Psoas muscle (tissue), 8 donors: ENCODE measurements at regions of chr2 and their contacts with region 1.

Region 1: DNA sequence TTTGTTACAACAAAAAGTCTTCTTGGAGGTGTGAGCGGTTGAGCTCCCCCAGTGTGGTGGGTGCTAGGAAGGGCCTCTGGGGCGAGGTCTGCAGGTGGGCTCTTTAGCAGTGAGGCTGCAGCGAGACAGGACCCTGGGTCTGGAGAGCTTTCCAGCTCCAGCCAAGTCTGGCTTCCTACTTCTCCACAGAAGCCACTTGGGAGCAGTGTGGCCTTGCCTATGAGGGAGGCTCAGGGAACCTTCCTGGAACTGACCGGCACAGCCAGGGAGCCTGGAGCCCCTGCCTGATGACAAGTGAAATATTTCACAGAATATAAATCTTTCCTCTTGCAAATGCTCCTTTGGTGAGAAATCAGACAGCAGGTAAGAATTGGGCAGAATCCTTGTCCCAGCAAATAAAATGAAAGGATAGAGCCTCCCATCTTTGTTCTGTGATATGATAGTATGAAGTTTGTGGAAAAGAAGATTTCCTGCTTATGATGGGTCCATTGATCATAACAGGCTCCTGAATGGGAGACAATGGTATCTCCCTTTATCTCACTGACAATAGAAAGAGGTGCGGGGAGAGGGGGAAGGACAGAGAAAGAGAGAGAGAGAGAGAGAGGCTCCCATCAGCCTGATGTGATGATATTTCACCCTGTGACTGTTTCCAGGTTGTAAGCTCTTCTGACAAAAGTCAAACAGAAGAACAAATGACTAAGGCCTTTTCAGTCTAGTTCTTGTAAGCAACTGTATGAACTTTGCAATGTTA is 289.8 kb upstream of the SPRED2 start:
- DNase-seq: peak; percentile 28 to 67
- ATAC-seq: peak; percentile 68 to 87 (median 78)
- H3K4me3 ChIP-seq: no peak overlapping the region
- H3K27ac ChIP-seq: no peak overlapping the region
- H3K4me1 ChIP-seq: no peaks in the 10 kb centered on the region
- H3K27me3 ChIP-seq: no peaks in the 10 kb centered on the region
- CTCF ChIP-seq: peak; percentile 45

Region 2: GRCh38 chr2:65350684-65351083 is 371.5 kb before region 1 on chr2:
- intact Hi-C with region 1: no loop called
- DNase-seq: no peak
- ATAC-seq: no peak
- H3K4me3 ChIP-seq: no peak overlapping the region
- H3K27ac ChIP-seq: peak overlapping the region; percentile 23
- H3K4me1 ChIP-seq: peaks cover 19% of the 10 kb centered on the region
- H3K27me3 ChIP-seq: no peaks in the 10 kb centered on the region
- CTCF ChIP-seq: no peak

Region 3: GRCh38 chr2:65800998-65801397 is 78.8 kb after region 1 on chr2:
- intact Hi-C with region 1: loop called in 1 of 2 experiments (anchors 2 kb)
- DNase-seq: no peak
- ATAC-seq: peak in 3 of 4 donors; percentile 56 to 61 (median 60)
- H3K4me3 ChIP-seq: no peak overlapping the region
- H3K27ac ChIP-seq: no peak overlapping the region
- H3K4me1 ChIP-seq: no peaks in the 10 kb centered on the region
- H3K27me3 ChIP-seq: no peaks in the 10 kb centered on the region
- CTCF ChIP-seq: peak; percentile 56

Region 4: DNA sequence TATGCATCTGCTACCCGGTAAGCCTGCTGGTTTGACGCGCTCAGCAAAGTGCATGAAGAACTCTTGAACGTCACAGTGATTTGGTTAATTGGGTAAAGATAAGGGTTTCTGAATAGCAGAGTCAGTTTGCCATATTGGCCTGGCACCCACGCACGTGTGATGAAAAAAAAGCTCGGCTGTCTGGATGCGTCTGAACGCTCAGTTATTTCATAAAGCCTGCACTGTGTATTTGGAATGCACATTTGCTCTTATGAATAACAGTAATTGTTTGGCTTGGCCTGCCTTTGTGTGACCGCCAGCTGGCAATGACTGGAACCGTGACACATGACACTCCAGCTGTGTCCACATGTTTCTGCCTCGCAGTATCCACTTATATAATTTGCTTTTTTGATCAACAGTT is 583.5 kb after region 1 on chr2:
- intact Hi-C with region 1: loop called in 1 of 2 experiments (anchors 10 kb)
- DNase-seq: peak; percentile 66 to 83
- ATAC-seq: peak in 2 of 4 donors; percentile 28 to 41
- H3K4me3 ChIP-seq: no peak overlapping the region
- H3K27ac ChIP-seq: no peak overlapping the region
- H3K4me1 ChIP-seq: peaks cover 1% of the 10 kb centered on the region
- H3K27me3 ChIP-seq: no peaks in the 10 kb centered on the region
- CTCF ChIP-seq: no peak

Region 5: DNA sequence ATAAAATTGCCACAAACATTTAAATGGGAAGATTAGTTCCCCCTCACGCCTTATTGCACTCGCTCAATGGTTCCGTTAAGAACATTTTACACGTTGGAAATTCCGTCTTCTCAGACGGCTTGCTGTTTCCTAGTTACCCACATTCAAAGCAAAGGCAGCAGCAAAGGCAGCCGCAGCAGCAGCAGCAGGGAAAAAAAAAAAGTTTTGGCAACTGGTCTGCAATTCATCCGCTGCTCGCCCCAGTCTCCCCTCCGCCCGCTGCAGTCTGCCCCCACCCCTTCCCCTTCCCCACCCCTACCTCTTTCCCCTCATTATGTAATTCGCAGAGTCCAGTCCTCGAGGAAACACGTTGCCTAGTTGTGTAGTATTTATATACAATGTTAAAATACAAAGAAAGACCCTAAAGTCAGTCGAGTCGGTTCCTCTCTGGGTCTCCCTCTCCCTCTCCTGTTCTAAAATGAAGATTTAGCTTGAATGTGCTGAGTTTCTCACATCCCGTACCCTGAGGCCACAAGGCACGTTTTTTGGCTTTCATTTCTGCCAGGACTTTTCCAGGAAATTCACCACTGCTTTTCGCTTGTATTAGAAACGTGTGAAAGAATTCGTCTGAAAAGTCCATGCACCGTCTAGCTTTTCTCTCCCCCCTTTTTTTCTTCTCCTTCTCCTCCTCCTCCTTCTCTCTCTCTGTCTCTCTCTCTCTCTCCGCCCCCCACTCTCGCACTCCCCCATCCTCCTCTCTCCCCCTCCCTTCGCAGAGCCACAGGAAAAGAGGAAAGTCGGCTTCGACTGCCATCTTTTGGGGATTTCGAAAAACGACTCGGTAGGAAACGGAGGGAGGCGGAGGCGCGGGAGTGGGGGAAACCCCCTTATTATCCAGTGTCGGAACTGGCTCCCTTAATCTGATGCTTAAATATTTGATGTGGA is 852.8 kb after region 1 on chr2:
- intact Hi-C with region 1: loop called in 1 of 2 experiments (anchors 5 kb)
- DNase-seq: peak; percentile 56 to 65
- ATAC-seq: peak; percentile 55 to 73 (median 64)
- H3K4me3 ChIP-seq: peak overlapping the region; percentile 66
- H3K27ac ChIP-seq: no peak overlapping the region
- H3K4me1 ChIP-seq: peaks cover 15% of the 10 kb centered on the region
- H3K27me3 ChIP-seq: peaks cover 0 to 61% (median 28%) of the 10 kb centered on the region in 3 donors
- CTCF ChIP-seq: peak; percentile 31